ENCODE measurements at regions of chr17 and their contacts with region 1.

Region 1: DNA sequence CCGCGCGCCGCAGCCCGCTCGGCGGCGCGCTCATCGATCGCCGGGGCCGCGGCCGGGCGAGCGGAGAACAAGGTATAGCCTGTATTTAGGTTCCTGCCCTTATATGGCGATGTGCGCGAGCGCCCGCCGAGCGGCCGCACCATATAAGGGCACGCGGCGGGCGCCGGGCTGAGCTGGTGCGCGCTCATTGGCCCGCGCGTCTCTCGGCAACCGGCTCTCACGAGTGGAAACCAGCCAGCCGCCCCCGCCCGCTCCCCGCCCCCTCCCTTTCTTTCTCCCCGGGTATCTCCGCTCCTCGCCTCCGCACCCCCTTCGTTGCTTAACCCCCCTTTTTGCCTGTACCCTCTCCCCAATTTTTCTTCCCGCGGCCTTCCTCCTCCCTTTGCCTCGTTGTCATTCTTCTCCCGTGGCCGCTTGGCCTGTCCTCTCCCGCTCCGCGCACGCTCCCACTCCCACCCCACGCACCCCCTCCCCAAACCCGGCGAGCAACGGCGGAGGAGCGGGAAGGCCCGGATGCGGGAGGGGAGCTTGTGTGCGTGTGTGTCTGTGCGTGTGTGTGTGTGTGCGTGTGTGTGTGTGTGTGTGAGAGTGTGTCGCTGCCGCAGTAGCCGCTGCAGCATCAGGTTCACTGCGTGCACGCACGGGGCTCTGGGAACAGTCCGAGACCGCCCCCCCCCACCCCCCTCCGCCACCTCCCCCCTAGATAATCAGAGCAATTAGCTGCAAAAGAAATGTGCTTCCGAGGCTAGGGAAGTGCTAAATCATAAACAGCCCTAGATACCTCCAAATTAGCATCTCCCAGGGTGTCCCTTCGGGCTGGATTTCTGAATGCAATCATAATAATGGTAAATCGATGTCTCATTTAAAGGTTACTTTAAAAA is 13.5 kb upstream of the CBX8 start:
- DNase-seq: peak in 1 of 2 experiments; percentile 79
- H3K4me3 ChIP-seq: peak overlapping the region in 2 of 4 experiments; percentile 16 to 55; a peak in 3 of 8 replicates
- H3K27ac ChIP-seq: no peak overlapping the region
- H3K4me1 ChIP-seq: peaks cover 0 to 54% (median 40%) of the 10 kb centered on the region in 4 experiments; a peak in 6 of 7 replicates
- H3K27me3 ChIP-seq: peaks cover 82 to 95% (median 93%) of the 10 kb centered on the region in 4 experiments
- CTCF ChIP-seq: no peak
- EP300 ChIP-seq: no peak
- POLR2A ChIP-seq: no peak
- RAD21 ChIP-seq: no peak

Region 2: DNA sequence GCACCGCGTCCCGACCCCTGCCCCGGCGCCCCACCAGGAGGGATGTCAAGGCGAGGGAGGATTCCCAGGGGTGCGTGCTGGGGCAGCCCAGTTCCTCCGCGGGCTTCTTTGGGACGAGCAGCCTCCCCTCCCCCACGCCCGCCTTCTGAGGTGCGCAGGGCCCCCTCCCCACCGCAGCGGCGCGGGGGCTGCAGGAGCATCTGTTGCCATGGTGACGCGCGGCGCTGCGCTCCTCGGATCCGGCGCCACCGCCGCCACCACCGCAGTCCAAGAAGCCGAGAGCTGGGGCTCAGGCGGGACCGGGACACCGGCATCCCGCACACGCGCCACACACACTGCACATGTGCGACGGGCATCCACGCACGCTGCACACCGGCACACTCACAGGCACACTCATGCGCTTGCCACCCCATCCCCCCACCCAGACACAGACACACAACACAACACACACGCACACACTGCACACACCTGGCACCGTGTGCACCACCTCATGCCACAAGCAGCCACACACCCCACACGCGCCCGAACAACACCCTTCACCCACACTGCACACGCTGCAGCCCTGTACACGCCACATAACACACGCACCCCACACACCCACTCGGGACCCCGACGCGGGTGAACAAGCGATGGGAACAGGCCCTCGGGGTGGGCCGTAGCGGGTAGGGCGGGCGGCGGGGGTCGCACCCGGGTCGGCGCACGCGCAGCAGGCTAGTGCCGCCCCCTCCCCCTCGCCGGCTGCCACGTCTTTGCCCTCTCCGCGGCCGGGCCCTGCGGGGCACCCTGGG is 62.7 kb before region 1 on chr17:
- CTCF ChIA-PET with region 1: interaction called, 94 read pairs
- POLR2A ChIA-PET with region 1: interaction called, 4 read pairs
- DNase-seq: no peak
- H3K4me3 ChIP-seq: peak overlapping the region; percentile 17 to 62 (median 36)
- H3K27ac ChIP-seq: no peak overlapping the region
- H3K4me1 ChIP-seq: peaks cover 4 to 24% (median 15%) of the 10 kb centered on the region in 4 experiments
- H3K27me3 ChIP-seq: peaks cover 19 to 47% (median 35%) of the 10 kb centered on the region in 4 experiments
- CTCF ChIP-seq: no peak
- EP300 ChIP-seq: no peak
- POLR2A ChIP-seq: no peak
- RAD21 ChIP-seq: no peak

Region 3: DNA sequence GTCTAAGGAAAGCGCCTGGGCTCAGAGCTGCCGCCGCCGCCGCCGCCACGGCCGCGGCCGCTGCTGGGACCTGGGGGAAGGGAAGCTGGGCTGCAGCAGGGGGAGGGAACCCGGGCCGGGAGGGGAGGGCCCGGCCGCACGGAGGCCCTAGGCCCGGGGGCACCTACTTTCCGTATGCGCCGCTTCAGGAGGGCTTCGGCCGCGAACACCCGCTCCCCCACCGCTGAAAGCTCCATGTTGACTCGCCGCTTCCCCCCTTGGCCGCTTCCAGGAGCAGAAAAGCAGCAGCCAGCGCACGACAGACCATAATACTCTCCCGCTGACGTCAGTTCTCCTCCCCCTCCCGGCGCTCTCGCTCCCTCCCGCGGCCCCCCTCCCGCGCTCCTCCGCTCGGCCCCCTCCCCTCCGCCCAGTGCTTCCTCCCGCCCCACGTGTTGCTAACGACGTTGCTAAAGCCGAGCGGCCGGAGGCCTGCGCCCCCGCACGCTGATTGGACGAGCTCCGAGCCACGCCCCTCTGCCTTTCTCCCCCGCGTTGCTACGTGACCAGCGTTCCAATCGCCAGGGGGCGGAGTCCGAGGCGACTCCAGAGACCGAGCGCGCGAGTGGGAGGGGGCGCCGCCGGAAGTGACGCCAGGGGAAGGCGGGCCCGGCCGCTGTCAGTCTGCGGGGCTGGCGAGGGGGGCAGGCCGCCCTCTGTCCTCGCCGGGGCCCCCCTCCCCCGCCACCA is 13.4 kb before region 1 on chr17 and contains the start of gene CBX8:
- CTCF ChIA-PET with region 1: interaction called, 576 read pairs
- POLR2A ChIA-PET with region 1: interaction called, 45 read pairs
- DNase-seq: peak; percentile 99 to 100
- H3K4me3 ChIP-seq: peak within 1 kb of the TSS; percentile 44 to 67 (median 53)
- H3K27ac ChIP-seq: peak within 1 kb of the TSS; percentile 66; the same call in 1 of the 2 replicates
- H3K4me1 ChIP-seq: peaks cover 8 to 58% (median 38%) of the 10 kb centered on the region in 4 experiments
- H3K27me3 ChIP-seq: peaks cover 80 to 92% (median 90%) of the 10 kb centered on the region in 4 experiments
- CTCF ChIP-seq: no peak
- EP300 ChIP-seq: peak in 1 of 2 experiments; percentile 59; a peak in 1 of 3 replicates
- POLR2A ChIP-seq: peak in 1 of 2 experiments; percentile 43; a peak in 1 of 3 replicates
- RAD21 ChIP-seq: no peak
- total RNA-seq, gene CBX8: 1.5 and 2.1 TPM in 2 replicates

Region 4: DNA sequence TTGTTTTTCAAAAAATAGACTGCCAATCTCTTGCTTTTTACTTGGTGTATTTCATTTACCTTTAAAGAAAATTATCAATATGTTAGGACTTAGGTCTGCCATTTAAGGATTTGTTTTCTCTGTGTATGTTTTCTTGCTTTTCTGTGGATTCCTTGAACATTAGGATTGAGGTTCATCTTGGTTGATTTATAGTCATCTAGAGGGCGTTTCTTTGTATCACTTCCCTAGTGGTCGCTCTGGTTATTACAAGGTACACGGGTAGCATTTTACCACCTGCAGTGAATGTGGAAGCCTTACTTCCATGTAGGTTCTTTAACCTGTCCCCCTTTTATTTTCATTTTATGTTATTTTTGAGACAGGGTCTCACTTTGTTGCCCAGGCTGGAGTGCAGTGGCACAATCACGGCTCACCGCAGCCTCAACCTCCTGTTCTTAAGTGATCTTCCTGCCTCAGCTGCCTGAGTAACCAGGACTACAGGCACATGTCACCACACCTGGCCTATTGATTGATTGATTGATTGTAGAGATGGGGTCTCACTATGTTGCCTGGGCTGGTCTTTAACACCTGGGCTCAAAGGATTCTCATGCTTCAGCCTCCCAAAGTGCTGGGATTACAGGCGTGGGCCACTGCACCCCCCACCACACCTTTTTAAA is 64.1 kb after region 1 on chr17:
- CTCF ChIA-PET with region 1: interaction called, 11 read pairs
- POLR2A ChIA-PET with region 1: no interaction called
- DNase-seq: no peak
- H3K4me3 ChIP-seq: no peak overlapping the region
- H3K27ac ChIP-seq: no peak overlapping the region
- H3K4me1 ChIP-seq: no peaks in the 10 kb centered on the region; a peak in 3 of 7 replicates
- H3K27me3 ChIP-seq: no peaks in the 10 kb centered on the region
- CTCF ChIP-seq: peak in 2 of 3 experiments; percentile 49 to 60; a peak in 2 of 4 replicates
- EP300 ChIP-seq: no peak
- POLR2A ChIP-seq: no peak
- RAD21 ChIP-seq: 0 out of 4 replicates have a peak, but pooled peaks of 1 of the 2 experiments have one; percentile 10

Region 5: GRCh38 chr17:79923974-79924638 is 113.7 kb after region 1 on chr17:
- CTCF ChIA-PET with region 1: interaction called, 10 read pairs
- POLR2A ChIA-PET with region 1: interaction called, 3 read pairs
- DNase-seq: peak; percentile 50 to 99
- H3K4me3 ChIP-seq: no peak overlapping the region
- H3K27ac ChIP-seq: no peak overlapping the region
- H3K4me1 ChIP-seq: peaks cover 0 to 16% (median 6%) of the 10 kb centered on the region in 4 experiments; a peak in 2 of 7 replicates
- H3K27me3 ChIP-seq: peaks cover 0 to 14% (median under 1%) of the 10 kb centered on the region in 4 experiments; a peak in 2 of 7 replicates
- CTCF ChIP-seq: peak; percentile 94 to 98 (median 95)
- EP300 ChIP-seq: no peak
- POLR2A ChIP-seq: no peak
- RAD21 ChIP-seq: peak; percentile 80 to 84

Measured in H1 (cell line).